ENCODE measurements at regions of chr11 and their contacts with region 1.

Region 1: GRCh38 chr11:69870766-69871165 is 51.5 kb upstream of the FGF3 start:
- DNase-seq: no peak
- H3K4me3 Mint-ChIP-seq: no peak overlapping the region
- H3K27ac Mint-ChIP-seq: no peak overlapping the region
- H3K4me1 Mint-ChIP-seq: peaks cover 12% of the 10 kb centered on the region
- H3K27me3 Mint-ChIP-seq: peaks cover 21% of the 10 kb centered on the region
- CTCF ChIP-seq: no peak

Region 2: DNA sequence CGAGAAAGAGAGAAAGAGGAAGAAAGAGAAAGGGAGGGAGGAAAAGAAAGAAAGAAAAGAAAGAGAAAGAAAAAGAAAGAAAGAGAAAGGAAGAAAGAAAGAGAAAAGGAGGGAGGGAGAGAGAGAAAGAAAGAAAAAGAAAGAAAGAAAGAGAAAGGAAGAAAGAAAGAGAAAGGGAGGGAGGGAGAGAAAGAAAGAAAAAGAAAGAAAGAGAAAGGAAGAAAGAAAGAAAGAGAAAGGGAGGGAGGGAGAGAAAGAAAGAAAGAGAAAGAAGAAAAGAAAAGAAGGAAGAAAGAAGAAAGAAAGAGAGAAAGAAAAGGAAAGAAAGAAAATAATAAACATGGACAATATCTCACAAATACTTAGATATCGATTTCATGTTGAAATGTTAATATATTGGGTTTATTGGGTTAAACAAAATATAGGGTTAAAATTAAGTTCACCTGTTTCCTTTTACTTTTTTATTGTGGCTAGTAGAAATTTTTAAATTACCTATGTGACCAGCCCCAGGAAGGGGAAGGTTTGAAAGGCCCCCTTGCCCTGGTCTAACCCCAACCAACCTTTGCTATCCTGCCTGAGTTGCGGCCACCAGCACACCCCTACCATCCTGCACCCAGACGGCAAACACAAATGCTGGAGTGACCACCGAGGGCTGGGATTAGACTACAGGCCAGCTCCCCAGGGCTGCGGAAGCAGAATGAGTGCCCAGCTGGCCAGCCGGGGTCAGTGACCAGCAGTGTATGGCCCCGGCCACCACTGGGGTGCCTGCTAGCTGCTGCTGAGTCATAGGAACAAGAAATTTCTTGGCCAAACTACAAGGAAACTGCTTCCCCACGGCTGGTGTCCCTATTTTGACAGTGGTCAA is 29.4 kb after region 1 on chr11:
- CTCF ChIA-PET with region 1: no interaction called
- intact Hi-C with region 1: no loop called
- DNase-seq: peak; percentile 85
- H3K4me3 Mint-ChIP-seq: peak overlapping the region; percentile 29
- H3K27ac Mint-ChIP-seq: peak overlapping the region; percentile 77
- H3K4me1 Mint-ChIP-seq: peaks cover 42% of the 10 kb centered on the region
- H3K27me3 Mint-ChIP-seq: no peaks in the 10 kb centered on the region
- CTCF ChIP-seq: no peak

Region 3: DNA sequence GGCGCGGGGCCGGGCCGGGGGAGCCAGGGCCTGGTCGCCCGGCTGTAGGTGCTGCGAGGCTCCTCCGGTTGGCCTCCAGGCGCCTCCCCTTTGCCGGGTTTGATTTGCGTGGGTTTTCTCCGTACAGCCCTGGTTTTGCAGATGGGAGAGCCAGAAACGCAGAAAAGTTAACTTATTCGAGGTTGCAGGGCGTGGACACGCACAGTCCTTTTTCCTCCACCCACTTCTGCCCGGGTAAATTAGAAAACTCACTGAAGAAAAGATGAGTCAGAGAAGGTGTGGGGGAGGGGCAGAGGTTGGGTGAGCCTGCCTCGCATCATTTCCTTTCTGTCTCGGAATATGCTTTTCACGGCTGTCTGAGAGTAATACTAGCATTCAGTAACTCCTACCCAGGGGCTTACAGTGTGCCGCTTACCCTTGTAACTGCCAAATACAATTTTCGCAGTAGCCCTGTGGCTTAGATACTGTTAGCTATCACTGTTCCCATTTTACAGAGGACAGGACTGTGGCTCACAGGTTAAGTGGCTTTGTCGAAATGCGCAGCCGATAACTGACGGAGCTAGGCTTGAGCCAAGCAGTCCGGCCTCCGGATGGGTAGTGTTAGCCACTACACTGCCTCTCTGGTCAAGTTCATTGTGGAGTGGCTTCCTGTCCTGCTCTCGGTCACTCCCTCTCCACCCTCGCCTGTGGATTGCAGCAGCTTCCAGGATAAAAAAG is 333.1 kb after region 1 on chr11:
- CTCF ChIA-PET with region 1: interaction called, 12 read pairs
- intact Hi-C with region 1: no loop called
- DNase-seq: peak; percentile 83
- H3K4me3 Mint-ChIP-seq: peak overlapping the region; percentile 88
- H3K27ac Mint-ChIP-seq: peak overlapping the region; percentile 73
- H3K4me1 Mint-ChIP-seq: peaks cover 37% of the 10 kb centered on the region
- H3K27me3 Mint-ChIP-seq: no peaks in the 10 kb centered on the region
- CTCF ChIP-seq: no peak